WTC11 (cell line): ENCODE measurements at regions of chr6 and their contacts with region 1.

Region 1: DNA sequence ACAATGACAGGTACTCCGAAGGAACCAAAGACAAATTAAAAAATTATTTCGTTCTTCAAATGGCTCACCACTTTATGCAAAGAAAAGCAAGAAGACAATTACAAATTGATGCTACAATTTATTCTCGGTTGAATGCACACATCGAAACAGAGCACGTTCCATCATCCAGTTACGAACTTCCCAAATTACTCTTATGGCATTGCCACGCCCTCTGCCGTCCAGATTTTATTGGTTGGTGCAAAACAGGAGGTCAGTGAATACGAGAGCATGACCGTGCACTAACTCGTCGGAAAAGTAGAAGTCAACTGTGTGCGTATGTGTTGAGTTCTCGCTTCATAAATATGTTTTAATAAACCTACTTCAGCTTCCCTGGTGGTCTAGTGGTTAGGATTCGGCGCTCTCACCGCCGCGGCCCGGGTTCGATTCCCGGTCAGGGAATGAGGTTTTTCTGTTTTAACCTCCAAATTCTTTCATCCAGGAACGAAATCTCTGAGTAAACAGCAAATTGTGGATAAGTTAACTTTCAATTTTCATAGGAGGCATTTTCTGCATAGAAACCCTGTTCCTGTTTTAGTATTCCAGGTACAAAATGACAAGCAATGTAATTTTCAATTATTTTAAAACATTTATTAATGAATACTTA is 23.2 kb downstream of the ZNF311 start:
- DNase-seq: peak; percentile 70
- ATAC-seq: no peak; the same call in 1 of the 2 replicates
- H3K4me3 Mint-ChIP-seq: peak overlapping the region; percentile 92
- H3K27ac Mint-ChIP-seq: peak overlapping the region; percentile 89
- H3K4me1 Mint-ChIP-seq: peaks cover 55% of the 10 kb centered on the region
- H3K27me3 Mint-ChIP-seq: peaks cover 21% of the 10 kb centered on the region
- CTCF ChIP-seq: no peak

Region 2: GRCh38 chr6:28776269-28777146 is 205.4 kb before region 1 on chr6:
- CTCF ChIA-PET with region 1: no interaction called
- POLR2A ChIA-PET with region 1: interaction called, 17 read pairs
- DNase-seq: no peak
- ATAC-seq: peak; percentile 45
- H3K4me3 Mint-ChIP-seq: peak overlapping the region; percentile 74
- H3K27ac Mint-ChIP-seq: peak overlapping the region; percentile 90
- H3K4me1 Mint-ChIP-seq: peaks cover 76% of the 10 kb centered on the region
- H3K27me3 Mint-ChIP-seq: peaks cover 97% of the 10 kb centered on the region
- CTCF ChIP-seq: no peak

Region 3: GRCh38 chr6:28923318-28924102 is 58.4 kb before region 1 on chr6 and contains the start of gene TRIM27:
- CTCF ChIA-PET with region 1: interaction called, 16 read pairs
- POLR2A ChIA-PET with region 1: interaction called, 14 read pairs
- DNase-seq: peak; percentile 87
- ATAC-seq: peak; percentile 90
- H3K4me3 Mint-ChIP-seq: peak within 1 kb of the TSS; percentile 82
- H3K27ac Mint-ChIP-seq: peak within 1 kb of the TSS; percentile 88
- H3K4me1 Mint-ChIP-seq: peaks cover 20% of the 10 kb centered on the region
- H3K27me3 Mint-ChIP-seq: no peaks in the 10 kb centered on the region
- CTCF ChIP-seq: no peak
- total RNA-seq, gene TRIM27: 65.8 to 79.8 TPM (median 68.3 TPM) in 3 replicates

Region 4: GRCh38 chr6:28969129-28969528 is 12.8 kb before region 1 on chr6:
- CTCF ChIA-PET with region 1: interaction called, 12 read pairs
- POLR2A ChIA-PET with region 1: interaction called, 3 read pairs
- DNase-seq: peak; percentile 78
- ATAC-seq: peak; percentile 61
- H3K4me3 Mint-ChIP-seq: no peak overlapping the region
- H3K27ac Mint-ChIP-seq: no peak overlapping the region
- H3K4me1 Mint-ChIP-seq: no peaks in the 10 kb centered on the region
- H3K27me3 Mint-ChIP-seq: peaks cover 12% of the 10 kb centered on the region
- CTCF ChIP-seq: no peak

Region 5: GRCh38 chr6:29016559-29017427 is 34.8 kb after region 1 on chr6:
- CTCF ChIA-PET with region 1: interaction called, 13 read pairs
- POLR2A ChIA-PET with region 1: no interaction called
- DNase-seq: peak; percentile 87
- ATAC-seq: peak; percentile 89
- H3K4me3 Mint-ChIP-seq: peak overlapping the region; percentile 87
- H3K27ac Mint-ChIP-seq: no peak overlapping the region
- H3K4me1 Mint-ChIP-seq: no peaks in the 10 kb centered on the region; the same call in none of the 2 replicates
- H3K27me3 Mint-ChIP-seq: peaks cover 43% of the 10 kb centered on the region
- CTCF ChIP-seq: peak; percentile 75